T-cell (primary cell): ENCODE measurements at regions of chr13 and their contacts with region 1.

Region 1: GRCh38 chr13:44969551-44970484 is 19.5 kb downstream of the NUFIP1 start:
- DNase-seq: peak in 1 of 35 experiments; percentile 48
- ATAC-seq: no peak
- H3K4me3 ChIP-seq: no peak overlapping the region
- H3K4me3 Mint-ChIP-seq: no peak overlapping the region
- H3K27ac ChIP-seq: no peak overlapping the region
- H3K27ac Mint-ChIP-seq: no peak overlapping the region
- H3K4me1 ChIP-seq: no peaks in the 10 kb centered on the region
- H3K4me1 Mint-ChIP-seq: no peaks in the 10 kb centered on the region
- H3K27me3 ChIP-seq: no peaks in the 10 kb centered on the region
- H3K27me3 Mint-ChIP-seq: no peaks in the 10 kb centered on the region

Region 2: DNA sequence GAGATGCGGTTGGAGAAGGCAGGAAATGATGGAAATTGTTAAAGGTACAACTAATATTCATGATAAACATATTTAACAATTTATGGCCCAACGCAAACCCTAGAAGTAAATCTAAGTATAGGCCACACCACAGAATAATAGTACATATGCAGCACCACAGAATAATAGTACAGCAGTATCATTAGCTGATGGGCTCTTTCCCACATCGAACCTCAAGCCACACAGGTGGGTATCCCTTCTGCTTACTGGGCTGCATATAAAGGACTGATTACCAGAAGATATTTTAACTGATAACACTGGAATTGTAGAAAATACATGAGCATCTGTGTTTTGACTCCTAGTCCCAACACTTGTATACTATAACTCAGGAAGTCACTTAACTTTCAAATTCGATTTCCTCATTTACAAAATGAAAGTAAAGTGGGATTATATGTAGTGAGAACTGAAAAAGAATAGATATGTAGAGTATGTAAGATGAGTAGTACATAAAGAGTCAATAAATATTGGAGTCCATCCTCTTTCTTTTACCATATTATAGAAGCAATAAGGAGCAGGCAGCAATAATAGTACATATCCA is 485.2 kb before region 1 on chr13:
- CTCF ChIA-PET with region 1: interaction called, 11 to 17 read pairs
- POLR2A ChIA-PET with region 1: interaction called in 1 of 2 experiments, 4 read pairs
- DNase-seq: peak in 1 of 35 experiments; percentile 13
- ATAC-seq: peak in 1 of 4 experiments; percentile 50
- H3K4me3 ChIP-seq: no peak overlapping the region
- H3K4me3 Mint-ChIP-seq: peak overlapping the region; percentile 35 to 43 (median 42)
- H3K27ac ChIP-seq: no peak overlapping the region
- H3K27ac Mint-ChIP-seq: peak overlapping the region; percentile 2 to 56
- H3K4me1 ChIP-seq: peaks cover 0 to 4% of the 10 kb centered on the region in 2 experiments
- H3K4me1 Mint-ChIP-seq: peaks cover 21 to 24% (median 23%) of the 10 kb centered on the region in 3 donors
- H3K27me3 ChIP-seq: no peaks in the 10 kb centered on the region
- H3K27me3 Mint-ChIP-seq: no peaks in the 10 kb centered on the region

Region 3: GRCh38 chr13:45015300-45015699 is 45.5 kb after region 1 on chr13:
- CTCF ChIA-PET with region 1: no interaction called
- POLR2A ChIA-PET with region 1: no interaction called
- DNase-seq: no peak
- ATAC-seq: no peak
- H3K4me3 ChIP-seq: no peak overlapping the region
- H3K4me3 Mint-ChIP-seq: no peak overlapping the region
- H3K27ac ChIP-seq: no peak overlapping the region
- H3K27ac Mint-ChIP-seq: no peak overlapping the region
- H3K4me1 ChIP-seq: no peaks in the 10 kb centered on the region
- H3K4me1 Mint-ChIP-seq: no peaks in the 10 kb centered on the region
- H3K27me3 ChIP-seq: no peaks in the 10 kb centered on the region
- H3K27me3 Mint-ChIP-seq: no peaks in the 10 kb centered on the region

Region 4: GRCh38 chr13:45179428-45179827 is 209.6 kb after region 1 on chr13:
- CTCF ChIA-PET with region 1: no interaction called
- POLR2A ChIA-PET with region 1: no interaction called
- DNase-seq: no peak
- ATAC-seq: no peak
- H3K4me3 ChIP-seq: no peak overlapping the region
- H3K4me3 Mint-ChIP-seq: no peak overlapping the region
- H3K27ac ChIP-seq: no peak overlapping the region
- H3K27ac Mint-ChIP-seq: no peak overlapping the region
- H3K4me1 ChIP-seq: peaks cover 0 to 2% of the 10 kb centered on the region in 2 experiments
- H3K4me1 Mint-ChIP-seq: peaks cover 36 to 38% (median 37%) of the 10 kb centered on the region in 3 donors
- H3K27me3 ChIP-seq: no peaks in the 10 kb centered on the region
- H3K27me3 Mint-ChIP-seq: no peaks in the 10 kb centered on the region

Region 5: GRCh38 chr13:46134961-46135522 is 1165.2 kb after region 1 on chr13:
- CTCF ChIA-PET with region 1: no interaction called
- POLR2A ChIA-PET with region 1: interaction called in 1 of 2 experiments, 15 read pairs
- DNase-seq: no peak
- ATAC-seq: no peak
- H3K4me3 ChIP-seq: no peak overlapping the region
- H3K4me3 Mint-ChIP-seq: no peak overlapping the region
- H3K27ac ChIP-seq: peak overlapping the region; percentile 15
- H3K27ac Mint-ChIP-seq: peak overlapping the region; percentile 69 to 86
- H3K4me1 ChIP-seq: peaks cover 0 to 5% of the 10 kb centered on the region in 2 experiments
- H3K4me1 Mint-ChIP-seq: peaks cover 19 to 33% (median 24%) of the 10 kb centered on the region in 3 donors
- H3K27me3 ChIP-seq: no peaks in the 10 kb centered on the region
- H3K27me3 Mint-ChIP-seq: no peaks in the 10 kb centered on the region